Endothelial cell of umbilical vein (primary cell): ENCODE measurements at regions of chr20 and their contacts with region 1.

Region 1: DNA sequence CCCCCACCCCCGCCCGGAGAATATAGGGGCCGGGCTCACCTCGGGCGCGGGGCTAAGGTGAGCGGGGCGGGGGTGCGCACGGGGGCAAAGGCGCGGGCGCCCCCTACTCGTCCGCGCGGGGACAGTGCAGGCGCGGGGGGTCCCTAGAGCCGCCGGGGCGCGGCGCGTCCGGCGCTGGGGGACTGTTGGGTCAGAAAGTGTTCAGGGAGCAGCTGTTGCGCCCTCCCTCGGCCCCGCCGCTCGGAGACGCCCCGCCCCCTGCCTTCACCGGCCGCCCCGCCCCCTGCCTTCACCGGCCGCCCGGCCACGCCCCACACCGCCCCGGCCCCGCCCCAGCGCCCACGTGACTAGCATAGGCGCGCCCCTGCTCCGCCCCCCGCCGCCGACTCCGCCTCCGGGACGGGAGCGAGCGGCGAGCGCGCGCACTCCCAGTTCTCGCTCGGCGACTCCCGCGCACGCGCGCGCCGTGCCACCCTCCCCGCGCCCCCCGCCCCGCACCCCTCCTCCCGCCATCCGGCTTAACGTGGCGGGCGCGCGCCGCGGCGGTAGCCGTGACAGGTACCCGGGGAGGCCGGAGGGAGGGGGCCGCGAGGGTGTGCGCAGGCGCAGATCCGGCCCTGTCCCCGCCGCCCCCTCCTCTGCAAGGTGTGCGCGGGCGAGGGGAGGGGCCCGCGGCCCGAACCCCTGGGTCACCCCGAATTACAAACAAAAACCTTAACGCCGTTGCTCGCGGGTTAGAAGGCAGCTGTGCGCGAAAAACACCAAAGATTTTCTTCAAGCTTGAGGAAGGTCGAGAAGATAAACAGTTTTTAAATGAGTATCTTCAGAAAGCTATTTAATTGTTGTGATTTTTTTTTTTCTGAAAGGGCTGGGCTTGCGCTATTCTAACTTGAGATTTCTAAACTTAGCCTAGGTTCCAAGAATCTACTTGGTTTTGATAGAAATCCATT is 704 bp upstream of the ZNF217 start:
- DNase-seq: peak; percentile 84
- H3K4me3 ChIP-seq: peak overlapping the region; percentile 82 to 94 (median 93)
- H3K27ac ChIP-seq: peak overlapping the region; percentile 82
- H3K4me1 ChIP-seq: peaks cover 42% of the 10 kb centered on the region
- H3K27me3 ChIP-seq: no peaks in the 10 kb centered on the region
- CTCF ChIP-seq: no peak
- POLR2A ChIP-seq: no peak

Region 2: DNA sequence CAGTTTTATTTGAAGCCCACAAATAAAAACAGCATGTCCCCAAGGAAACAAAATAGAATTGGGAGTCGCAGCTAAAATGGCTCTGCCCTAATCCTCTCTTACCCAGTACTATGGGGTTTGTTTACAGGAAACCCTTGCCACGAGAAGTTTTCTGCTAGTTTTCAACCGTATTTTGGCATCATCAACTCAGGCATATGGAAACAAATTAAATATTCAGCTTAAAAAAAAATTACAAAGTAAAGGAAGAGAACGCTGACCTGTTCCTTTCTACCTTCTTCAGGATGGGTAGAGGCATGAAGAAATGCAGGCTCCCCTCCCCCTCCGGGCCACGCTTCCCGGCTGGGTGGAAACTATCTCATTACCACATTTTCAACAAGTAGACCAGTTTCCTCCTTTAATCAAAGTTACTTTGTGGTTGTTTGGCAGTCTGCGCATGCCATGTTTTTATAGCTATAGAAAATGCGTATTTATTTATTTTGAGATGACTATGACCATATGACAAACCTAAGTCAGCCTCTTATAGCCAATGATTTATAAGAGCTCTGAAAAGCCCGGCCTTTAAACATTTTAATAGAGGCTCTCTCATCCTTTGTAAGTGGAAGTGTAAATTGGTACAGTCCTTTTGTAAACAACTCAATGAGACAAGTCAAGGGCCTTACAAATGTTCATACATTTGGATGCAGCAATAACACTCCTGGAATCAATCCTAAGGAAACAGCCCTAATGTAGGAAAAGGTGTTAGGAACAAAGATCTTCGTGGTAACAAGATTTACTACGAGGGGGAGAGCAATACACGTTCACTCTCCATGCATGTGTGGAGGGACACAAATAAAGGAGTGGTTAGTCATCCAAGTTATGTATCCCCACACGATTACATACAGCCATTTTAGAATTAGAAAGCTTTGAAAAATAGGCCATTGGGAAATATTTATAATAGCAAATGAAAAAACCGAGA is 15.4 kb after region 1 on chr20:
- CTCF ChIA-PET with region 1: interaction called, 7 read pairs
- POLR2A ChIA-PET with region 1: no interaction called
- dilution Hi-C with region 1: no loop called
- intact Hi-C with region 1: loop called (anchors 1 kb)
- DNase-seq: peak; percentile 55
- H3K4me3 ChIP-seq: no peak overlapping the region
- H3K27ac ChIP-seq: peak overlapping the region; percentile 29
- H3K4me1 ChIP-seq: peaks cover 29% of the 10 kb centered on the region
- H3K27me3 ChIP-seq: no peaks in the 10 kb centered on the region
- CTCF ChIP-seq: no peak
- POLR2A ChIP-seq: no peak

Region 3: DNA sequence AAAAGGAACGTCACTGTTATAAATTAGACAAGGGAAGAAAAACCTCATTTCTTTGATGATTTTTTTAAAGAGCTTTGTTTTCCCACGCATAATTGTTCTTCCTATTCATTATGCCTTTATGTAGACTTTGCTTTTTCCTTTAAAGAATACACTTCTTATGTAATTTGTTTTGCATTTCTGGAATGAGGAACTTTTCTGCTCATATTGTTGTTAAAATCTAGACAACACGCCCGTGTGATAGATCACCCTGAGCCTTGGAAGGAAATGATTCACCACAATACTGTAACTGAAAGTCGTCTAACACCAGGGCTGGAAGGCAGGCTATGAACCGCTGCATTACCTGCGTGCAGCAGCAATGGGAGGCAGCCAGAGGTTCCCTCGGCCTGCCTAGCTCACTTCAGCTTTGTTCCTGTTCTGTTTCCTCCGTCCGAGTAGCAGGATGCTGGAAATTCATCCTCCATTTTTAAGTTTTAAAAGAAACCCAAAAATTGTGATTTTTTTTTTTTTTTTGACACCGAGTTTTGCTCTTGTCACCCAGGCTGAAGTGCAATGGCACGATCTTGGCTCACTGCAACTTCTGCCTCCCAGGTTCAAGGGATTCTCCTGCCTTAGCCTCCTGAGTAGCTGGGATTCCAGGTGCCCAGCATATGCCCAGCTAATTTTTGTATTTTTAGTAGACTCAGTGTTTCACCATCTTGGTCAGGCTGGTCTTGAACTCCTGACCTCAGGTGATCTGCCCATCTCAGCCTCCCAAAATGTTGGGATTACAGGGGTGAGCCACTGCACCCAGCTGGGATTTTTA is 48.9 kb after region 1 on chr20:
- CTCF ChIA-PET with region 1: no interaction called
- POLR2A ChIA-PET with region 1: no interaction called
- dilution Hi-C with region 1: no loop called
- intact Hi-C with region 1: loop called (anchors 2 kb)
- DNase-seq: peak; percentile 91
- H3K4me3 ChIP-seq: peak overlapping the region in 1 of 3 experiments; percentile 28
- H3K27ac ChIP-seq: peak overlapping the region; percentile 89
- H3K4me1 ChIP-seq: peaks cover 20% of the 10 kb centered on the region
- H3K27me3 ChIP-seq: no peaks in the 10 kb centered on the region
- CTCF ChIP-seq: no peak
- POLR2A ChIP-seq: no peak

Region 4: DNA sequence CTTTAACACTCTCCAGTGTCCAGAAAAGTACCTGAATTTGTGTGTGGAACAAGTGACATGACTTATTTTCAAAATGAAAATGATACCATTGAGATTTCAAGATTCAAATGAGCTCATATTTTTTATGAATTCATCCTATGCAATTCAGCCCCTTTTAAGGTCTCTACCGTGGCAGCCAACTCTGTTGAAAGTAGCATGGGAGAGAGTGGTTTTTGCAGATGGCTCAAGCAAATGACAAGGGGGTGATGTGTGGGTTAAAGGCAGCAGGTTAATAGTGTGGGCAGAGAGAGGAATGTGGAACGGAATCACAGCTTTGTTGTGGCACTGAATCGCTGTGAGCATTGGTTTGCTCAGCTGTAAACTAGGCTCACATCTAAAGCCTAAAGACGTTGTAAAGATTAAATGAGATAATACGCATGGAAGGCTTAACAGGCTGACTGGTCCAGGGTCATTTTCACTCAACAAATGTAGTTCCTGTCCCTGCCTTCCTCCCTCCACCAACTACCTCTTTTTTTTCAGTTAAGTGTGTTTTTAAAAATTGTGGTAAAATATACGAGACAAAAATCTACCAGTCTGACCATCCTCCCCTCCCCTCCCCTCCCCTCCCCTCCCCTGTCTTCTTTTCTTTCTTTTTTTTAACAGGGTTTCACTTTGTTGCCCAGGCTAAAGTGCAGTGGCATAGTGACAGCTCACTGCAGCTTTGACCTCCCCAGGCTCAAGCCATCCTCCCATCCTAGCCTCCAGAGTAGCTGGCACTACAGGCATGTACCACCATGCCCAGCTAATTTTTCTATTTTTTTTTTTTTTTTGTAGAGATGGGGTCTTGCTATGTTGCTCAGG is 114.0 kb after region 1 on chr20:
- CTCF ChIA-PET with region 1: no interaction called
- POLR2A ChIA-PET with region 1: no interaction called
- dilution Hi-C with region 1: no loop called
- intact Hi-C with region 1: no loop called
- DNase-seq: no peak
- H3K4me3 ChIP-seq: no peak overlapping the region
- H3K27ac ChIP-seq: no peak overlapping the region
- H3K4me1 ChIP-seq: no peaks in the 10 kb centered on the region
- H3K27me3 ChIP-seq: no peaks in the 10 kb centered on the region
- CTCF ChIP-seq: no peak
- POLR2A ChIP-seq: no peak

Region 5: DNA sequence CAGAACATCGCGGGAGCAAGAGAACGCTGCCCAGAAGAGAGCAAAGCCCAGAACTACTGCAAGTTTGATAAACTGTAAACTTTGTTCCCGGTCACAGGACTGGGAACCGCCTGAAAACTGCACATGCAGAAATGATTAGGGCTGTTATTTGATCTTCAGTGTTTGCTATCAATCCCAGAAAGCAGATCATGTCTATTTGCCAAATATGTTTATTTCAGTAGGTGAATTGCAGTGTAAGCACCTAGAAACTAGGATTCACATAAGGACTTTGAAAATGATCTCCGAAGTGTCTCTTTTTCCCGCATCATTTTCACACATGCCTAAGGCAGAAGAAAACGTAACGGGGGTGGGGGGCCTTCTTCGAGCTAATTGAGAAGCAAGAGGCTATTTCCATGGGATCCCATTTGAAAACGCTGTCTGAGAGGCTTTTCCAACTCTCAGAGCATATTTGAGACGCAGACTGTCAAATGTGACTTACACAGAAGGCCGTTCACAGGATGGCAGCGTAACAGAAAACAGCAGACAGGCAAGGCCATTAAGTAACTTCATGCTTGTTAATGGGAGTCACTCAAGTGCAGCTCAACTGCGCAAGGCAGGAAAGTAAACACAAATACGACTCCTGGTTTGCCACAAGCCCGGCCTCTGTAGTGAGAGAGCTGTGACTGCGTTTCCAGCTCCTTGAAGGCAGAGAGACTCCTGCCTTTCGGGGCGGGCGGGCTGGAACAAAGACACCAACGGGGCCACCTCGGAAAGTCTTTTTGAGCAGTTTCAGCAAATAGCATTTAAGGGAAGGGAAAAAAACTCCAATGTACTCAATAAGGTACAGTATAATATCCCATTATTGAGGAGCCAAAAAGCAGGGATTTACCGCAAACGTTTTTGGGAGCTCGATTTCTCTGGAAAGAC is 143.9 kb after region 1 on chr20:
- CTCF ChIA-PET with region 1: interaction called, 3 read pairs
- POLR2A ChIA-PET with region 1: no interaction called
- dilution Hi-C with region 1: no loop called
- intact Hi-C with region 1: loop called (anchors 5 kb)
- DNase-seq: no peak
- H3K4me3 ChIP-seq: no peak overlapping the region
- H3K27ac ChIP-seq: no peak overlapping the region
- H3K4me1 ChIP-seq: peaks cover 11% of the 10 kb centered on the region
- H3K27me3 ChIP-seq: peaks cover 2 to 7% of the 10 kb centered on the region in 2 experiments
- CTCF ChIP-seq: no peak
- POLR2A ChIP-seq: no peak

Region 6: DNA sequence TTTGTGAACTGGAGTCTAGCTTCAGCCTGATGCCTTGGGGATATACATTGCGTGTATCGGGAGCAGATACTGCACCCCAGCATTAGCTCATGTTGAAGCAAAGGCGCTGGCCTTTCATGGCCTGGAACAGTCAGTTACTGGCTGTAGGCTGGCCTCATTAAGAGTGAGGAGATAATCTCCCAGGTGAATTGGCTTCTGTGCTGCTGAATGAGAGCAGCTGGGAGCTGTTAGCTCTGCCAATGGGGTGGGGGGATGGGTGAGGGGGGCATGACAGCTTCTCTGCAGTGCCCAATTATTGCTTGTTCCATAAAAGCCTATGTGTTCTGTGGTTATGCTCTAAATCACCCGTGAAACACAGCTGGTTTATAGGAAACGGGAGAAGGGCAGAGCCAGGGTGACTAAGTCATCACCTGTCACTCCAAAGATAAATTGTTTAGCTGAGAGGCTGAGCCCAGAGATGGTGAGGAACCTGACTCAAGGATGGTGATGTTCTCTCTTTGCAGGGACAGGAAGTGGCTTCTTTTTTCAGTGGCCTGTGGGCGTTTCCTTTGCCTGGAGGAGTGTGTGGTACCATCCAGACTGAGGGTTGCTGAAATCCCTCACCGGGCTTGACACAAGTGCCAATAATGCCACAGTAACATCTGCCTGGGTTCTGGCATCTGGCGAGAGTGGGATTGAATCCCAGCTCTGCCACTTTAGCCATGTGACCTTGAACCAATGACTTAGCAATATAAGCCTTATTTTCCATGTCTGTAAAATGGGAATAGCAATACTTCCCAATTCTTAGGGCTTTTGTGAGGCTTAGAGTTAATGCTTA is 305.2 kb after region 1 on chr20:
- CTCF ChIA-PET with region 1: no interaction called
- POLR2A ChIA-PET with region 1: interaction called, 5 read pairs
- dilution Hi-C with region 1: no loop called
- intact Hi-C with region 1: loop called (anchors 1 kb)
- DNase-seq: peak; percentile 47
- H3K4me3 ChIP-seq: no peak overlapping the region
- H3K27ac ChIP-seq: peak overlapping the region; percentile 97
- H3K4me1 ChIP-seq: peaks cover 50% of the 10 kb centered on the region
- H3K27me3 ChIP-seq: no peaks in the 10 kb centered on the region
- CTCF ChIP-seq: no peak
- POLR2A ChIP-seq: no peak